IMR-90 (cell line): ENCODE measurements at regions of chr7 and their contacts with region 1.

Region 1: DNA sequence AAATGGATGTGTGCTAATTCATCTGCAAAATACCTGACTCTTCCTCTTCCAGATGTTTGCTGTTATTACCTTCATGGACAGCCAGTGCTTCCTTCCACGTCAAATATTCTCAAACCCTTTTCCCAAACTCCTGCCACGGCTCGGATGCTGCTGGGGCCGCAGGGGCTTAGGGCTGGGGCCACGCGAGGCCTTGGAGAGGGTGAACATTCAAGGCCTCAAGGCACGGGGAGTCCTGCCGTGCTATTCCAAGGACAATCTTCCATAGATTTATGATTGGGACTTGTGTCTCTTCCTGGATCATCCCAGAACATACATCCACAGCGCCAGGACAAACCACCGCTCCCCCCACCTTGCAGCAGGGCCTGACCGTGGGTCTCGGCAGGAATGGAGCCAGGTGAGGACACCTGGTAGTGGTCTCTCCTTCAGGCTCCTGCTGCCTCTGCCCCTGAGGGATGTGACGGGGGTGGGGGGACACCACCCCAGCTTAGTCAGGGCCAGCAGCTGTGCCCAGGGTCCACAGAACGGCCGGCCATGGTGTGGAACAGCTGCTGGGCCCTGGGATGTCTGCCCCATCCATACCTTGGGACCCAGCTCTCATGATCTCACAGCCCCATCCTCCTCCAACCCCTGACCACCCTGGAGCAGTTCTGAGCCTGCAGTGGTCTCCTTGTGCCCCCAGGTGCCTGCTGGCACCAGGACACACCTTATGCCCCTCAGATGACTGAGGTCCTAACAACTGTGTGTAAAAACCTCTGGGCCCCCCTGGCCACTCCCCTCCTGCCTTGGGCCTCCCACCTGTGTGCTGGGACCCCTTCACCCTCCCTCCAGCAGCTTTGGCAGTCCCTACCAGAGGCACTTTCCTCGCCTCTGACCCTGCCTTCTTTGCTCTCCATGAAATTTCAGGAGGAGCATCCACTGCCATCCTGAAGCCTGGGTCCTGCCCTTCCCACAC is 16.7 kb downstream of the VIPR2 start:
- DNase-seq: no peak
- ATAC-seq: no peak
- H3K4me3 ChIP-seq: no peak overlapping the region
- H3K27ac ChIP-seq: no peak overlapping the region
- H3K4me1 ChIP-seq: no peaks in the 10 kb centered on the region
- H3K27me3 ChIP-seq: no peaks in the 10 kb centered on the region
- CTCF ChIP-seq: no peak
- POLR2A ChIP-seq: no peak
- RAD21 ChIP-seq: no peak

Region 2: DNA sequence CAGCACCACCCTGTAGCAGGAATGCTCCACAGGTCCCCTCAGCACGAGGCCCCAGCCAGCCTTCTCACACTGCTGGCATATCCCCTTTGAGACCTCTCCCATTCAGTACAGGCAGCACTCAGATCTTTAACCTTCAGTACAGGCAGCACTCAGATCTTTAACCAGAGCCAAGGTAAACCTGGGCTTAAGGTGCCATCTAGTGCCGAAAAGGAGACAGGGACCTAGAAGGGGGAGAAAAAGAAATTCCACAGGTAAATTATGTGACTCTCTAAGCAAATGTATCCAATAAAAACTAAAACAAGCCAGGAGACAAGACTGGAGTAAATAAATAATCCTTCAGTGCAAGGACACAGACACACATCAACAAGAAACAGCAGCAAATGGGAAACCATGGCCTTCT is 899.0 kb before region 1 on chr7:
- CTCF ChIA-PET with region 1: no interaction called
- POLR2A ChIA-PET with region 1: no interaction called
- dilution Hi-C with region 1: no loop called
- in situ Hi-C with region 1: no loop called
- intact Hi-C with region 1: no loop called
- DNase-seq: no peak
- ATAC-seq: no peak
- H3K4me3 ChIP-seq: no peak overlapping the region
- H3K27ac ChIP-seq: no peak overlapping the region
- H3K4me1 ChIP-seq: no peaks in the 10 kb centered on the region
- H3K27me3 ChIP-seq: no peaks in the 10 kb centered on the region
- CTCF ChIP-seq: no peak
- POLR2A ChIP-seq: no peak
- RAD21 ChIP-seq: no peak

Region 3: DNA sequence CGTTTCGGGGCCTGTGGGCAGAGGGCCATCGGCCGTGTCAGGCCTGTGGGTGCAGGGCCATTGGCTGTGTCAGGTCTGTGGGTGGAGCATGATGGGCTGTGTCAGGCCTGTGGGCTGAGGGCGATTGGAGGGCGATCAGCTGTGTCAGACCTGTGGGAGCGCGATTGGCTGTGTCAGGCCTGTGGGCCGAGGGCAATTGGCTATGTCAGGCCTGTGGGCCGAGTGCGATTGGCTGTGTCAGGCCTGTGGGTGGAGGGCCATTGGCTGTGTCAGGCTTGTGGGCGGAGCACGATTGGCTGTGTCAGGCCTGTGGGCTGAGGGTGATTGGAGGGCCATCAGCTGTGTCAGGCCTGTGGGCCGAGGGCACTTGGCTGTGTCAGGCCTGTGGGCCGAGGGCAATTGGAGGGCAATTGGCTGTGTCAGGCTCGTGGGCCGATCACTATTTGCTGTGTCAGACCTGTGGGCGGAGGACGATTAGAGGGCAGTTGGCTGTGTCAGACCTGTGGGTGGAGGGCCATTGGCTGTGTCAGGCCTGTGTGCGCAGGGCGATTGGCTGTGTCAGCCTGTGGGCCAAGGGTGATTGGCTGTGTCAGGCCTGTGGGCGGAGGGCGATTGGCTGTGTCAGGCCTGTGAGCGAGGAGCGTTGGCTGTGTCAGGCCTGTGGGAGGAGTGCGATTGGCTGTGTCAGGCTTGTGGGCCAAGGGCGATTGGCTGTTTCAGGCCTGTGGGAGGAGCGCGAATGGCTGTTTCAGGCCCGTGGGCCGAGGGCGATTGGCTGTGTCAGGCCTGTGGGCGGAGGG is 217.5 kb before region 1 on chr7:
- CTCF ChIA-PET with region 1: no interaction called
- POLR2A ChIA-PET with region 1: no interaction called
- dilution Hi-C with region 1: no loop called
- in situ Hi-C with region 1: no loop called
- intact Hi-C with region 1: no loop called
- DNase-seq: no peak
- ATAC-seq: no peak
- H3K4me3 ChIP-seq: no peak overlapping the region
- H3K27ac ChIP-seq: no peak overlapping the region
- H3K4me1 ChIP-seq: no peaks in the 10 kb centered on the region
- H3K27me3 ChIP-seq: no peaks in the 10 kb centered on the region
- CTCF ChIP-seq: no peak
- POLR2A ChIP-seq: no peak
- RAD21 ChIP-seq: no peak

Region 4: DNA sequence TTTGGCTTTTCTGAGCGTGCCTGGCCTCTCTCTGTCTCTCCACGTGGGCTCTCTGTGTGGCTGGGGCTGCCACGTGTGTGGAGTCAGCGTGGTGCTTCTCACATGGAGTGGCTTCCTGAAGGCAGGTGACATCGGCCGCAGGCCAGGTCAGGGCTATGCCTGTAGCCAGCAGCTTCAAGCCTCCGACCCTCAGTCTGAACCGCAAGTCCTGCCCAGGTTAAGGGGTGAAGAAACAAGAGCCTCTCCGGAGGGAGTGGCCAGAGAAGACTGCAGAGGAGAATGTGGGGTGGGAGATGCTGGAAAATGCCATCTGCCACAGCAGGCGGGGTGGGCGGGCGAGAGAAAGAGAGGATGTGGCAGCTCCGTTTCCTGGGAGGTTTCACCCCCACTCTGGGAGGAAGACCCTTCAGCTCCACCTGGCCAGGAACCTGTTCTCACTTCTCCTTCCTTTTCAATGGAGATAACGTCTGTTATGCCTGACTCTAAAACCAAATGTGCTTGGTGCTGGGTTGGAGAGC is 31.0 kb after region 1 on chr7:
- CTCF ChIA-PET with region 1: no interaction called
- POLR2A ChIA-PET with region 1: no interaction called
- dilution Hi-C with region 1: no loop called
- in situ Hi-C with region 1: no loop called
- intact Hi-C with region 1: loop called (anchors 2 kb)
- DNase-seq: no peak
- ATAC-seq: no peak
- H3K4me3 ChIP-seq: no peak overlapping the region
- H3K27ac ChIP-seq: no peak overlapping the region
- H3K4me1 ChIP-seq: no peaks in the 10 kb centered on the region
- H3K27me3 ChIP-seq: no peaks in the 10 kb centered on the region
- CTCF ChIP-seq: no peak
- POLR2A ChIP-seq: no peak
- RAD21 ChIP-seq: no peak